Heart right ventricle (tissue), 16 donors: ENCODE measurements at regions of chr15 and their contacts with region 1.

Region 1: GRCh38 chr15:33766389-33766788 is 201.9 kb upstream of the CHRM5 start:
- DNase-seq: no peak
- ATAC-seq: no peak
- H3K4me3 ChIP-seq: no peak overlapping the region
- H3K27ac ChIP-seq: no peak overlapping the region
- H3K4me1 ChIP-seq: no peaks in the 10 kb centered on the region
- H3K27me3 ChIP-seq: peaks cover 0 to 4% (median 0%) of the 10 kb centered on the region in 7 donors
- CTCF ChIP-seq: no peak

Region 2: GRCh38 chr15:33810073-33810595 is 43.7 kb after region 1 on chr15:
- intact Hi-C with region 1: loop called in 1 of 10 experiments (anchors 5 kb)
- DNase-seq: no peak
- ATAC-seq: no peak
- H3K4me3 ChIP-seq: no peak overlapping the region
- H3K27ac ChIP-seq: no peak overlapping the region
- H3K4me1 ChIP-seq: no peaks in the 10 kb centered on the region
- H3K27me3 ChIP-seq: peaks cover 0 to 11% (median 0%) of the 10 kb centered on the region in 7 donors
- CTCF ChIP-seq: no peak